WTC11 (cell line): ENCODE measurements at regions of chr10 and their contacts with region 1.

Region 1: DNA sequence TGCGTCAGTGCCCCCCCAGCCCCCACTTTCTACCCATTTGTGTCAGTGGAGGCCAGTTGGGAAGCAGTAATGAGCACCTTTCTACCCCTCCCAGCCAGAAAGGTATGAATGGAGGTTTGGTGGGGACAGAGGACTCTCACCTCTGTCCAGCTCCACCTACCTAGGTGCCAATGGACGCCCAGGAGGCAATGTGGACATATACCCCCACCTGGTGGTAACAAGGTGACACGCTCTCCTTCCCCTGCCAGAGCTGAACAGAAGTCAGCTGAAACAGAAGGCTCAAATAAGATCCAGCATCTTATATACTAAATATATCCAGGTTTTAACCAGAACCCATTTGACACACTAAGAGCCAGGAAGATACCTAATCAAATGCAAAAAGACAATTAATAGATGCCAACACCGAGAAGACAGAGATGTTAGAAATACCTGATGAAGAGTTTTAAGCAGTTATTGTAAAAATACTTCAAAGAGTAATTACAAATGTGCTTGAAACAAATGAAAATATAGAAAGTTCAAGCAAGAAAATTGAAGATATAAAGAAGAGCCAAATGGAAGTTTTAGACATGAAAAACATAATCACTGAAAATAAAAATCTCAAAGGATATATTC is 18.4 kb upstream of the SORCS3 start:
- DNase-seq: peak; percentile 68
- ATAC-seq: peak; percentile 99
- H3K4me3 Mint-ChIP-seq: no peak overlapping the region
- H3K27ac Mint-ChIP-seq: no peak overlapping the region
- H3K4me1 Mint-ChIP-seq: no peaks in the 10 kb centered on the region
- H3K27me3 Mint-ChIP-seq: peaks cover 2% of the 10 kb centered on the region
- CTCF ChIP-seq: peak; percentile 56

Region 2: DNA sequence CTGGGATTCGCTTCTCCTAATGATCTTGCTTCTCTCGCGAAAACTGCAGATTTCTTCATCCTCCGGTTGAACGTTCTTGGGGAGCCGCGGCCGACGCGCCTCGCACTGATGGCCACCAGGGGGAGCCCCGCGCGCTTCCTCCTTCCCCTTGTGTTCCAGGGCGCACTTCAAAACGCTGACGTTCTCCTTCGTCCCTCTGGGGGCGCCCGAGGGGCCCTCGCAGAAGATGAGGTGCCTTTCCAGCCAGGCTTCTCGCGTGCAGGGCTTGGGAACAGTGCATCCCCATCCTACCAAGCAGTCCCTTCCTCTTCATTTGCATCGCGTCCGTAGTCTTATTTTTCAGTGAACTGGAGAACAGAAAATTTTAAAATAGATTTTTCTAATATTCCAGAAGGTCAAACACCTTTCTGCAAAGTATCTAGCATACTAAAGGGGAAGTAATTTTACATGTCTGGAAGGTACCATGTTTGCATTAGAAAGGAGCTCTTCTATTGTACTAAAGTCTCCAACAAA is 331.2 kb before region 1 on chr10:
- CTCF ChIA-PET with region 1: interaction called, 10 read pairs
- POLR2A ChIA-PET with region 1: no interaction called
- DNase-seq: peak; percentile 90
- ATAC-seq: peak; percentile 99
- H3K4me3 Mint-ChIP-seq: peak overlapping the region; percentile 40
- H3K27ac Mint-ChIP-seq: no peak overlapping the region
- H3K4me1 Mint-ChIP-seq: peaks cover 23% of the 10 kb centered on the region
- H3K27me3 Mint-ChIP-seq: peaks cover 7% of the 10 kb centered on the region
- CTCF ChIP-seq: peak; percentile 99

Region 3: GRCh38 chr10:104406715-104407650 is 215.7 kb before region 1 on chr10:
- CTCF ChIA-PET with region 1: interaction called, 51 read pairs
- POLR2A ChIA-PET with region 1: no interaction called
- DNase-seq: no peak
- ATAC-seq: peak; percentile 67
- H3K4me3 Mint-ChIP-seq: no peak overlapping the region
- H3K27ac Mint-ChIP-seq: no peak overlapping the region
- H3K4me1 Mint-ChIP-seq: peaks cover 8% of the 10 kb centered on the region
- H3K27me3 Mint-ChIP-seq: no peaks in the 10 kb centered on the region; the same call in 1 of the 2 replicates
- CTCF ChIP-seq: no peak

Region 4: GRCh38 chr10:104580774-104581675 is 41.7 kb before region 1 on chr10:
- CTCF ChIA-PET with region 1: interaction called, 40 read pairs
- POLR2A ChIA-PET with region 1: no interaction called
- DNase-seq: peak; percentile 81
- ATAC-seq: peak; percentile 92
- H3K4me3 Mint-ChIP-seq: no peak overlapping the region
- H3K27ac Mint-ChIP-seq: no peak overlapping the region
- H3K4me1 Mint-ChIP-seq: peaks cover 9% of the 10 kb centered on the region
- H3K27me3 Mint-ChIP-seq: no peaks in the 10 kb centered on the region; the same call in 1 of the 2 replicates
- CTCF ChIP-seq: peak; percentile 90

Region 5: DNA sequence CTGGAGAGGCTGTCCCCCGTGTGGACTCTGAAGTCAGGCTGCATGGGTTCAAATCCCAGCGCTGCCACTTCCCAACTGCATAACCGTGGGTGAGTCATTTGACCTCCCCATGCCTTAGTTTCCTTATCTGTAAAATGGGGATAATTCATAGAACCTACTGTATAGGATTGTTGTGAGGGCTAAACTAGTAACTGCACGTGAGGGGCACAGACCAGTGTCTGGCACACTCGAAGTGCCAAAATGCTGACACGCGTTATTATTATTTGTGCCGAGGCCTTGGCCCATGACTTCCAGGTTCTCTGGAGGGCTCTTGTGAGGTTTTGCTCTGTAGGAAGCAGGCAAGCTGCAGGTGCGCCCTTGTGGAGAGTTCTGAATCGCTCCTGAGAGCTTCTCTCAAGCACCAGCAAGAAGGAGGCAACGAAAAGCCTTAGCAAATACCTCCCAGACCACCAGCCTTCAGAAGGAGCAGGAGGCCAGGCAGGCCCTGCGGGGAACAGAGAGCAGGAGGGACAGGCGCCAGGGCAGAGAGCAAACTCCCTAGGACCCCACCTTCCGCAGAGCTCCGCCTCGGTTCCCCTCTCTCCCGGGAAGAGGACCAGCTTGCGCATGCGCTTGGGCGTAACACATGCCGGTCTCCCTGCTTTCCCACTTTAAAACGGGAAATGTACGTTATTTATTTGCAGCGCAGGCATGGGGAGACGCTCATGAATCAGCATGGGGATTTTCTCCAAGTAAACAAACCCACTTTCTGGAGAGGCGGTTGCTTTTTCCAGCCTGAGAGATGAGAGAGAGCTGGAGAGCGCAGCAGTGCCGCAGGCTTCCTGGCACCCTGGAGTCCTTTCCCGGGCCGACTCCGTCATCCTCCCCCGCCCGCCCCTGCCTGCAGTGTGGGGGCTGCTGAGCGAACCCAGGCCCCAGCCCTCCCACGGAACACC is 58.0 kb after region 1 on chr10:
- CTCF ChIA-PET with region 1: no interaction called
- POLR2A ChIA-PET with region 1: no interaction called
- DNase-seq: peak; percentile 61
- ATAC-seq: peak; percentile 92
- H3K4me3 Mint-ChIP-seq: peak overlapping the region; percentile 75
- H3K27ac Mint-ChIP-seq: peak overlapping the region; percentile 42; the same call in 1 of the 2 replicates
- H3K4me1 Mint-ChIP-seq: peaks cover 8% of the 10 kb centered on the region
- H3K27me3 Mint-ChIP-seq: peaks cover 12% of the 10 kb centered on the region
- CTCF ChIP-seq: no peak

Region 6: GRCh38 chr10:104796823-104797222 is 174.1 kb after region 1 on chr10:
- CTCF ChIA-PET with region 1: no interaction called
- POLR2A ChIA-PET with region 1: no interaction called
- DNase-seq: no peak
- ATAC-seq: no peak
- H3K4me3 Mint-ChIP-seq: no peak overlapping the region
- H3K27ac Mint-ChIP-seq: no peak overlapping the region
- H3K4me1 Mint-ChIP-seq: peaks cover 10% of the 10 kb centered on the region
- H3K27me3 Mint-ChIP-seq: no peaks in the 10 kb centered on the region
- CTCF ChIP-seq: no peak

Region 7: GRCh38 chr10:104880624-104881398 is 258.1 kb after region 1 on chr10:
- CTCF ChIA-PET with region 1: no interaction called
- POLR2A ChIA-PET with region 1: no interaction called
- DNase-seq: no peak
- ATAC-seq: no peak
- H3K4me3 Mint-ChIP-seq: no peak overlapping the region
- H3K27ac Mint-ChIP-seq: no peak overlapping the region
- H3K4me1 Mint-ChIP-seq: peaks cover 3% of the 10 kb centered on the region; the same call in 1 of the 2 replicates
- H3K27me3 Mint-ChIP-seq: no peaks in the 10 kb centered on the region
- CTCF ChIP-seq: no peak